A549 (cell line): ENCODE measurements at regions of chr19 and their contacts with region 1.

Region 1: GRCh38 chr19:36054119-36054732 is at the start of gene THAP8:
- DNase-seq: peak; percentile 100
- ATAC-seq: peak; percentile 82 to 88
- H3K4me3 ChIP-seq: peak within 1 kb of the TSS; percentile 84
- H3K27ac ChIP-seq: peak within 1 kb of the TSS; percentile 89 to 93
- H3K4me1 ChIP-seq: peaks cover 22% of the 10 kb centered on the region
- CTCF ChIP-seq: peak; percentile 54
- EP300 ChIP-seq: no peak; a peak in 1 of 5 replicates
- POLR2A ChIP-seq: peak; percentile 93
- RAD21 ChIP-seq: peak in 1 of 2 experiments; percentile 17; a peak in 2 of 5 replicates
- polyA plus RNA-seq, gene THAP8: 3.1 and 3.2 TPM in 2 replicates

Region 2: DNA sequence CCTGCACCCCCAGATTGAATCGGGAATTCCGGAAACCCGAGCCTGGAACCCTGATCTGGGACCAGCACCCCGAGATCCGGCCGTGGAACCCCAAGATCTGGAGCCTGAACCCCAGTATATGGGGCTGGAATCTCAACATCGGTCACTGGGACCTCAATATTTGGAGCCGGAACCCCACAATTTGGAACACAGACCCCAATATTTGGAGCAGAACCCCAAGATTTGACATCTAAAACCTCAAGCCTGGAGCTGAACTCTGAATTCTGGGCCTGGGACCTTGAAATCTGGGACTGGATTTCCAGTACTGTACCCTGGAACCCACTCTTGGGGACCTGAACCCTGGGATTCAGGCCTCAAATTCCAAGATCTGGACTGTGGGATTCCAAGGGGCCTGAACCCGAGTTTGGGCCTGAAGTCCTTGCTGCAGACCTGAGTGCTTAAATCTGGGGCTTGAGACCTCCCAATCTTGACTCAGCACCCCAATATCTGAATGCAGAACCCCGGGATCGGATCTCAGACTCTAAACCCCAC is 117.4 kb before region 1 on chr19:
- CTCF ChIA-PET with region 1: no interaction called
- POLR2A ChIA-PET with region 1: no interaction called
- DNase-seq: no peak
- ATAC-seq: no peak
- H3K4me3 ChIP-seq: peak overlapping the region; percentile 66
- H3K27ac ChIP-seq: peak overlapping the region; percentile 84 to 93
- H3K4me1 ChIP-seq: peaks cover 26% of the 10 kb centered on the region
- CTCF ChIP-seq: no peak
- EP300 ChIP-seq: no peak
- POLR2A ChIP-seq: no peak
- RAD21 ChIP-seq: no peak

Region 3: DNA sequence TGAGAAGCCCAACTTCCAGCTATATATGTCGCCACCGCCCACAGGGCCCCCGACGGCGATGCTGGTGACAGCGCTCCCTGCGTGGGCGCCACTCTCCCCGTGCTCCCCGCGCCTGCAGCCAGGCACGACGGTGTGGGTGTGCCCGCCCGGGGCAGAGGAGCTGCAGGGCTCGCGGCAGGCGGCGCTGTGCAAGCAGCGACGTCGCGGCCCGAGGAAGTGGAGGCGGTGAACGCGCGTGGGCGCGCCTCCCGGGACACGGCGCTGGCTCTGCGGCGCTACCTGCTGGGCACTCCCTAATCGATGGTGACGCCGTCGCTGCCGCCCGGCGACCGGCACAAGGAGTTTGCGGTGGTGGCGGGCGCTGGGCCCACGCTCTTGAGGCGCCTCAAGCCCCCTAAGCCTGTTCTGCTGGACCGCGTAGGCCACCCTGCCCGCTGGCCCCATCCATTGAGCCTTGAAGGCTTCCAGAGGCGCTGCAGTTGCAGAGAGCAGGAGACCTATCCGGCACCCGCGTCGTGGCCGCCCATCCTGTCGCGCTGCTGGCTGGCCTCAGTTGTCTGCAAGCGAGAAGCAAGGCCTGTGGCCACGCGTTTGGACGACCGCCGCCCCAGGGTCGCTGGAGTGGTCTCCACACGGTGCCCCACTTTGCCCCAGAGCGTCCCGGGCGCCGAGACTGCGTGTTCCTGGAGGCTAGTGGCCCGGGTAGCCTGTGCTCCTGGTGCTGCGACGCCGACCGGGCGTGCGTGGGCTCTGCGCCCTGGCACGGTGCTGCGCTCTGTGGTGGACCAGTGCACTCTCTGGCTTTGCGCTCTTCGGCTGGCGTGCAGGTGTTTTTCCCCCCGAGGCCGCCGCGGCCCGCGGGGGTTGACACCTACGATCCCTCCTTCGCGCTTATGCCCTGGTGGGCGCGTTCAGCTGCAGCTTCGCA is 94.9 kb before region 1 on chr19:
- CTCF ChIA-PET with region 1: no interaction called
- POLR2A ChIA-PET with region 1: no interaction called
- DNase-seq: no peak
- ATAC-seq: peak; percentile 68 to 80
- H3K4me3 ChIP-seq: peak overlapping the region; percentile 21; the same call in 2 of the 3 replicates
- H3K27ac ChIP-seq: no peak overlapping the region
- H3K4me1 ChIP-seq: peaks cover 7% of the 10 kb centered on the region; the same call in 2 of the 3 replicates
- CTCF ChIP-seq: peak; percentile 43
- EP300 ChIP-seq: no peak
- POLR2A ChIP-seq: no peak
- RAD21 ChIP-seq: peak in 1 of 2 experiments; percentile 20; a peak in 1 of 5 replicates

Region 4: GRCh38 chr19:36103626-36104552 is 49.7 kb after region 1 on chr19:
- CTCF ChIA-PET with region 1: interaction called, 157 read pairs
- POLR2A ChIA-PET with region 1: interaction called, 3 read pairs
- DNase-seq: peak in 1 of 2 experiments; percentile 38
- ATAC-seq: peak; percentile 3 to 7; a peak in 4 of 6 replicates
- H3K4me3 ChIP-seq: no peak overlapping the region
- H3K27ac ChIP-seq: no peak overlapping the region
- H3K4me1 ChIP-seq: peaks cover 5% of the 10 kb centered on the region; the same call in 2 of the 3 replicates
- CTCF ChIP-seq: no peak
- EP300 ChIP-seq: no peak
- POLR2A ChIP-seq: no peak
- RAD21 ChIP-seq: no peak